Psoas muscle (tissue), 8 donors: ENCODE measurements at regions of chr9 and their contacts with region 1.

Region 1: DNA sequence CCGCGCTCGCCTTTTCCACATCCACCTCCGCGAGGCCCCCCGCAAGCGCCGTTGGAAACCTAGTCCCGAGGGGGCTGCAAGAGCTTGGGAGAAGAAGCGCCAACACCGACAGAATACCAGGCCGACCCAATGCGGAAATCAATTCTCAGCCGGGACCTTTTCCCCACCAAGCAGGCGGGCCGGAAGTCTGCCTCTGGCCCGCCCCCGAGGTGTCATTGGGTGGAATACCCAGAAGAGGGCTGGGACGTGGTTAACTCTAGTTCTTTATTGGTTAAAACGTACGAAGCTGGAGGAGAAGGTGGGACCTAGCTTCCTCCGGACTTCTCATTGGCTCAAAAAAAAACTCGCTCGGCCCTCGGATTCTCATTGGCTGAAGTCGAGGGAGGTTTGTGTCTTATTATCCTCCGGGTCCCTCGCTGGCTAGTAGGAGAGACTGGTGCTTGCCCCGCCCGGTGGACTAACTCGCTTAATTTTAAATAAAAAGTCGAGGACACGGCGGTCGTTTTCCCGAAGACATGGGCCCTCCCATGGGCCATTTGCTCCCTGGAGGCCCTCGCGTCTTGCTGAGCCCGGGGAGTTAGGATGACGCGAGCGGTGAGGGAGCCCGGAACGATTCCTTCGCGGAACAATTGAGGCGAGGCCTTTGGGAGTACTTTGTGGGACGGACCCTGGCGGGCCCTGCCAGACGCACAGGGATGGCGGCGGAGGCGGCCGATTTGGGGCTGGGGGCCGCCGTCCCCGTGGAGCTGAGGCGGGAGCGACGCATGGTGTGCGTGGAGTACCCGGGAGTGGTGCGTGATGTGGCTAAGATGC is at the start of gene GTF3C5:
- DNase-seq: peak; percentile 92 to 95
- ATAC-seq: peak; percentile 98 to 99 (median 98)
- H3K4me3 ChIP-seq: peak within 1 kb of the TSS; percentile 99
- H3K27ac ChIP-seq: peak within 1 kb of the TSS; percentile 86
- H3K4me1 ChIP-seq: peaks cover 36% of the 10 kb centered on the region
- H3K27me3 ChIP-seq: no peaks in the 10 kb centered on the region
- CTCF ChIP-seq: no peak
- total RNA-seq, gene GTF3C5: 34.6 to 45.8 (median 42.2) TPM

Region 2: DNA sequence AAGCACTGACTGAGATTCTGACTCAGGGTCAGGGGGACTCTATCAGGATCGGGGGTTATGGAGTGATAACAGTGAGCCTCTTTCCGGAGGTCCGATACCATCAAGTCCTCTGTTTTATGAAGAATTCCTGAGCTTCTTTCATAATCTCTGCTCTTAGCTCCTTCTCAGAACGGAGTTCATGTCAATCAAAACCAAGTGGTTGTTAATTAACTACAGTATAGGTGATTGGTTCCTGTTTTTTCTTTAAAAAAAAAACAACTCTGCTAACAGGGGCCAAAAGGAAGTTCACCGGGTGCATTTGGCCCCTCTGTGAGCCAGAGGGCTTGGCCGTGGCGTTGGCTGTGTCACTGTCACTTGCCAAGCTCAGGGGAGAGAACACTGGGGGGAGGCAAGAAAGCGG is 48.1 kb before region 1 on chr9:
- intact Hi-C with region 1: no loop called
- DNase-seq: no peak
- ATAC-seq: no peak
- H3K4me3 ChIP-seq: no peak overlapping the region
- H3K27ac ChIP-seq: no peak overlapping the region
- H3K4me1 ChIP-seq: peaks cover 4% of the 10 kb centered on the region
- H3K27me3 ChIP-seq: peaks cover 0 to 22% (median 2%) of the 10 kb centered on the region in 3 donors
- CTCF ChIP-seq: no peak

Region 3: GRCh38 chr9:133492061-133493021 is 461.8 kb after region 1 on chr9:
- intact Hi-C with region 1: loop called in 1 of 2 experiments (anchors 10 kb)
- DNase-seq: peak in 1 of 2 donors; percentile 72
- ATAC-seq: peak; percentile 80 to 93 (median 86)
- H3K4me3 ChIP-seq: peak overlapping the region; percentile 19
- H3K27ac ChIP-seq: peak overlapping the region; percentile 79
- H3K4me1 ChIP-seq: peaks cover 22% of the 10 kb centered on the region
- H3K27me3 ChIP-seq: no peaks in the 10 kb centered on the region
- CTCF ChIP-seq: no peak